Heart right ventricle (tissue), 16 donors: ENCODE measurements at regions of chr2 and their contacts with region 1.

Region 1: GRCh38 chr2:20051532-20052228 is at the start of gene LAPTM4A:
- DNase-seq: peak; percentile 98 to 99
- ATAC-seq: peak; percentile 96 to 98 (median 98)
- H3K4me3 ChIP-seq: peak within 1 kb of the TSS; percentile 48 to 91 (median 69)
- H3K27ac ChIP-seq: peak within 1 kb of the TSS; percentile 87 to 99 (median 98)
- H3K4me1 ChIP-seq: peaks cover 0 to 44% (median 30%) of the 10 kb centered on the region in 9 donors
- H3K27me3 ChIP-seq: peaks cover 0 to 7% (median 0%) of the 10 kb centered on the region in 7 donors
- CTCF ChIP-seq: peak in 4 of 9 donors; percentile 11 to 25 (median 15)
- total RNA-seq, gene LAPTM4A: 138 to 325 (median 183) TPM

Region 2: DNA sequence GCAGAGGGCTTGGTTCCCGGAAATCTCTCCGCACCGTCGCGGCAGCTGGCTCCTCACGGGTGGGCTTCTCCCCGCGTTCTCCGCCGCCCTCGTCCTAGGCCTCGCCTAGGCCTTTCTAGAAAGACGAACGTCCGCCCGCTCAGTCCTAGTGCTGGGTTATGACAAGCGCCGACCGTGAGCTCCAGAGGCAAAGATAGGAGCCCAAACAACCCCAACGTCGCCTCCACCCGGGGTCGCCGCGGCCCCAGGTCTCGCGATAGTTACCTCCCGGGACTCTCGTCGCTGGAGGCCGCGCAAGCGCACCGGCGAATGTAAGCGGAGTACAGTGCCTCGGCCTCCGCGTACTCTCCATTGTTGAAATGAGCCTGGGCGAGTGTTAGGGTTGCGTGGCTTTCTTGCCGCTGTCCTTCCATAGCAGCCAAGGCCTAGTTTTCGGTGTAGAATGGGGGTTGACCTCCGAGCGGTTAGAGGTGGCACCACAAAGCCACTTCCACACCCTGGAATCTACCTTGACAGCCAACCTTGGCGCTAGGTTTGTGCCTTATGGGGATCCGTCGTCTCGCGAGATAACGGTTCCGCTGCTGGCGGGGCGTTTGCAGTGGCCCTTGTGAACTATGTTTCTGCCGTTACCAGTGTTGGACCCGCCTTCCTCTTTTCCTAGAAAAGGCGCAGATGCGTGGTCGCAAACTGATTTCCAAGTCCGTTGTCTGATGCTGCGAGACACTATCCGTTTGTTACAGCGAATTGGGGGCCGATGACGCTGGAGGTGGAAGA is 150.1 kb before region 1 on chr2 and contains the start of gene TTC32:
- intact Hi-C with region 1: loop called in 1 of 10 experiments (anchors 5 kb)
- DNase-seq: peak; percentile 94 to 96
- ATAC-seq: peak; percentile 97 to 99 (median 98)
- H3K4me3 ChIP-seq: peak within 1 kb of the TSS; percentile 70 to 97 (median 80)
- H3K27ac ChIP-seq: peak within 1 kb of the TSS; percentile 87 to 99 (median 95)
- H3K4me1 ChIP-seq: peaks cover 3 to 51% (median 47%) of the 10 kb centered on the region in 9 donors
- H3K27me3 ChIP-seq: no peaks in the 10 kb centered on the region
- CTCF ChIP-seq: peak in 1 of 9 donors; percentile 9
- total RNA-seq, gene TTC32: 3.4 to 9.0 (median 6.0) TPM

Region 3: DNA sequence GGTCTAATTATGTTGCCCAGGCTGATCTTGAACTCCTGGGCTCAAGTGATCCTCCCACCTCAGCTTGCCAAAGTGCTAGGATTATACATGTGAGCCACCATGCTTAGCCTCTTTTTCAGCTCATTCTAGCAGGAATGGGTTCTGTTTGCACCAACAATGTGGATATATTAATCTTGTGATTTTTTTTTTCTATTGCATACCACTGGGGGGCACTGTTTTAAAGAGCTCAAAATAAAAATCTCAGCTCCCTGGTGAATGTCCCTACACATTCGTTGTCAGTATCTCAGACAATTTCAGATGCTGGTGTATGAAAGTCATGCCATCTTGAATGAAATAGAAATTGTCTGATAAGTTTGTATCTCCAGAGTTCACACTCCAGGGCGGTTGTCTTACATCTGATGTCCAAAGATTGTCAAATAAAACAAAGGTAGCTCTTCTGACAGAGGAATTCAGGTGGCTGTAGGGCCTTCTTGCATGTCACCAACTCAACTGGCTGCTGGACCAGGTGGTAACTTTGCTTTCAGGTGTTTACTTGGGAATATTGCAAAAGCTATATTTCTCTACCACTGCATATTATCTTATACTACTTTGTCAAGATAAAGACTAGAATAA is 36.1 kb before region 1 on chr2:
- intact Hi-C with region 1: loop called in 2 of 10 experiments (anchors 5 kb)
- DNase-seq: no peak
- ATAC-seq: peak in 4 of 8 donors; percentile 41 to 57 (median 54)
- H3K4me3 ChIP-seq: no peak overlapping the region
- H3K27ac ChIP-seq: no peak overlapping the region
- H3K4me1 ChIP-seq: peaks cover 3 to 16% (median 11%) of the 10 kb centered on the region in 9 donors
- H3K27me3 ChIP-seq: peaks cover 0 to 38% (median 11%) of the 10 kb centered on the region in 7 donors
- CTCF ChIP-seq: peak; percentile 40 to 73 (median 64)

Region 4: DNA sequence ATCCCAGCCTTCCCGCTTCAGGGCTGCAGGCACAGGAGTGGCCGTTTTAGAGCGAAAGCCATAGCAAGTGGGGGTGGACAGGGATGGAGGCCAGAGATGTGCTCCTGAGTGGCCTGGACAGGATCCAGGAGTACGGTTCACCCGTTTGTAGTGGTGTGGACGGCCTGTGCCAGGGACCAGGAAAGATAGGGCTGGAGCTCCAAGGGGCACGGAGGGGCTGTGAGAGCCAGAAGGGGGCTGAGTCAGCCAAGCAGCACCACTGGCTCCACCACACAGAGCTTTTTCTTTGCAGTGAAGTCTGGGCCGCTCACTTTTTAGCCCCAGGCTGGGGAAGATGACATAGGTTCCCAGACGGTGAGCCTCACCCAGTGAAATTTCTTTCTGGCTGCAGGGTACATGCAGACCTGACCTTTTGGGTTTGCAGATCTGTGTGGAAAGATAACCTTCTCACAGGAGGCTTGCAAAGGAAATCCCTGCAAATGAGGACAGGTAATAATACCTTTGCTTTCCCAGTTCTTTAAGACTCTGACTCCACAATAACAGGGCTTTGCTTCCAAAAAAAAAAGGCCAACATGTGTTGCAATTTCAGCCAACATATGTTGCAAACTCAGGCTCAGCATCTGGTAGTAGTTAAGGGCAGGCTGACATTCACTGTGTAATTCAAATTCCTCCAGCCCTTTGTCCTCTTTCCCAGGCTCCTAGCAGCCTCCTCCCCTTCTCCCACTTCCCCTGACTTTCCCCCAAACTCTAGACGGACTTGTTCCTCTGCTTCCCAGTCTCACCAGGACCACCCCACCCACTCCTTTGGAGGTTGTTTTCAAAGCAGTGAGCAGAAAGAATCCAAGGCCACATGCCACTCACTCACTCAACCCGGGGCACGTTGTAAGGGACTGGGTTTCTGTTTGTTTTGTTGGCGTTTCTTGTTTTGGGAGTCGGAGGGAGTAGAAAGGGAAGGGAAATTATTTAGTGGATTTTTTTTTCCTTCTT is 20.0 kb after region 1 on chr2:
- intact Hi-C with region 1: loop called in 1 of 10 experiments (anchors 2 kb)
- DNase-seq: peak; percentile 67 to 75
- ATAC-seq: peak; percentile 82 to 95 (median 86)
- H3K4me3 ChIP-seq: peak overlapping the region in 1 of 10 donors; percentile 20
- H3K27ac ChIP-seq: peak overlapping the region; percentile 70 to 85 (median 82)
- H3K4me1 ChIP-seq: peaks cover 12 to 46% (median 32%) of the 10 kb centered on the region in 9 donors
- H3K27me3 ChIP-seq: no peaks in the 10 kb centered on the region
- CTCF ChIP-seq: no peak

Region 5: GRCh38 chr2:20097879-20098714 is 46.4 kb after region 1 on chr2:
- intact Hi-C with region 1: loop called in 1 of 10 experiments (anchors 5 kb)
- DNase-seq: peak; percentile 79 to 85
- ATAC-seq: peak; percentile 76 to 89 (median 84)
- H3K4me3 ChIP-seq: no peak overlapping the region
- H3K27ac ChIP-seq: no peak overlapping the region
- H3K4me1 ChIP-seq: peaks cover 0 to 11% (median 6%) of the 10 kb centered on the region in 9 donors
- H3K27me3 ChIP-seq: peaks cover 0 to 4% (median 0%) of the 10 kb centered on the region in 7 donors
- CTCF ChIP-seq: peak; percentile 68 to 96 (median 91)